ENCODE measurements at regions of chr12 and their contacts with region 1.

Region 1: DNA sequence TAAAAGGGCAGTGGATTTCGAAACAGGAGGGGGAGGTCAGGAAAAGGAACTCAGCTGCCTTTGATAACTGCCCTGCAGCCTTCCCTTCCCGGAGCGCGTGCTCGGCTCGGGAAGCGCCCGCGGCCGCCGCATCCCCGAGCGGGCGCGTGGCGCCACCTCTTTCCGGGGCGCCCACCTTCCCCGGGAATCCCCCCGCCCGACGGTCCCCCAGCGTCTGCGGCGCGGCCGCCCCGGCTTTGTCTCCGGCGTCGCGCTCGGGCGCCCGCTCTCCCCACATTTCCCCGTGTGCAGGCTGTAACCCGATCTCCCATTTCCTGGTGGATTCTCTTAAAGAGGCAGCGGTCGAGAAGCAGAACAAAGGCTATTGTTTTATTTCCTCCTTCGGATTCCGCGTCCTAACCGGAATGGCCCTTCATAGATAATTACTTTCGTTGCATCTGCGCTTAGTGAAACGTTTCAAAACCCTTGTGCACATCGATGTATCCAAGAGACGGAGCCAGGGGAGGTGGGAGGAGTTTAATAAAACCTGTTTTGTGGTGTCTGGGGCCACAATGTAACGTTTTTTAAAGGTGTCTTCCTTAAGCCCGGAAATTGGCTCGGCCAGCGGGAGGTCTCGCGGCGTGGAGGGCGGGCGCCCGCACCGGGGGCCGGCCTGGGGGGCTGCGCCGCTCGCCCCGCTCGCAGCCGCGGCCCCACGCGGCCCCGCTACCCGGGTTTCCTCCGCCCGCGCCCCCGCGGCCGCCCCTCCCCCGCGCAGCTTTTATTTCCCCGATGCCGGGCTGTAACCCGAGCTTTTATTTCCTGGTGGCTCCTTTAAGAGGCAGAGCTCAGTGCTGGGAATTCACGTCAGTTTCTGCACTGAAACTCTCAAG is at the start of gene ETV6:
- DNase-seq: peak; percentile 83 to 89
- H3K4me3 ChIP-seq: peak within 1 kb of the TSS; percentile 85
- H3K27ac ChIP-seq: peak within 1 kb of the TSS; percentile 99
- H3K4me1 ChIP-seq: peaks cover 29% of the 10 kb centered on the region
- H3K27me3 ChIP-seq: no peaks in the 10 kb centered on the region
- CTCF ChIP-seq: no peak
- total RNA-seq, gene ETV6: 52.1 and 62.8 TPM in 2 replicates

Region 2: DNA sequence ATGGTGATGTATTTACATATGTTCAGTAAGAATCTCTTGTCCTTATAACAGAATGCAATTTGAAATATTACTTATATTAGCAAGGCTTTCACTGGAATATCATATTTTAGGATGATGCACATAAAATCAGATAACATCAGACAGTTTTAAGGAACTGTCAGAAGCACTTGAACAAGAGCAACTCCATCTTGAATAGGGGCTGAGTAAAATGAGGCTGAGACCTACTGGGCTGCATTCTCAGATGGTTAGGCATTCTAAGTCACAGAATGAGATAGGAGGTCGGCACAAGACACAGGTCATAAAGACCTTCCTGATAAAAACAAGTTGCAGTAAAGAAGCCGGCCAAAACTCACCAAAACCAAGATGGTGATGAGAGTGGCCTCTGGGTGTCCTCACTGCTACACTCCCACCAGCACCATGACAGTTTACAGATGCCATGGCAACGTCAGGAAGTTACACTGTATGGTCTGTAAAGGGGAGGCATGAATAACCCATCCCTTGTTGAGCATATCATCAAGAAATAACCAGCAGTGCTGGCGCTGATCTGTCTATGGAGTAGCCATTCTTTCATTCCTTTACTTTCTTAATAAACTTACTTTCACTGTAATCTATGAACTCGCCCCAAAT is 27.2 kb before region 1 on chr12:
- CTCF ChIA-PET with region 1: no interaction called
- POLR2A ChIA-PET with region 1: no interaction called
- intact Hi-C with region 1: loop called (anchors 2 kb)
- DNase-seq: no peak
- H3K4me3 ChIP-seq: no peak overlapping the region
- H3K27ac ChIP-seq: peak overlapping the region; percentile 85; the same call in 1 of the 2 replicates
- H3K4me1 ChIP-seq: peaks cover 23% of the 10 kb centered on the region
- H3K27me3 ChIP-seq: no peaks in the 10 kb centered on the region
- CTCF ChIP-seq: no peak

Region 3: GRCh38 chr12:11730299-11731041 is 81.4 kb after region 1 on chr12:
- CTCF ChIA-PET with region 1: interaction called, 3 read pairs
- POLR2A ChIA-PET with region 1: interaction called, 14 read pairs
- intact Hi-C with region 1: loop called (anchors 1 kb)
- DNase-seq: peak; percentile 83 to 96
- H3K4me3 ChIP-seq: peak overlapping the region; percentile 8; the same call in 1 of the 2 replicates
- H3K27ac ChIP-seq: peak overlapping the region; percentile 87
- H3K4me1 ChIP-seq: peaks cover 44% of the 10 kb centered on the region
- H3K27me3 ChIP-seq: no peaks in the 10 kb centered on the region
- CTCF ChIP-seq: no peak

Region 4: DNA sequence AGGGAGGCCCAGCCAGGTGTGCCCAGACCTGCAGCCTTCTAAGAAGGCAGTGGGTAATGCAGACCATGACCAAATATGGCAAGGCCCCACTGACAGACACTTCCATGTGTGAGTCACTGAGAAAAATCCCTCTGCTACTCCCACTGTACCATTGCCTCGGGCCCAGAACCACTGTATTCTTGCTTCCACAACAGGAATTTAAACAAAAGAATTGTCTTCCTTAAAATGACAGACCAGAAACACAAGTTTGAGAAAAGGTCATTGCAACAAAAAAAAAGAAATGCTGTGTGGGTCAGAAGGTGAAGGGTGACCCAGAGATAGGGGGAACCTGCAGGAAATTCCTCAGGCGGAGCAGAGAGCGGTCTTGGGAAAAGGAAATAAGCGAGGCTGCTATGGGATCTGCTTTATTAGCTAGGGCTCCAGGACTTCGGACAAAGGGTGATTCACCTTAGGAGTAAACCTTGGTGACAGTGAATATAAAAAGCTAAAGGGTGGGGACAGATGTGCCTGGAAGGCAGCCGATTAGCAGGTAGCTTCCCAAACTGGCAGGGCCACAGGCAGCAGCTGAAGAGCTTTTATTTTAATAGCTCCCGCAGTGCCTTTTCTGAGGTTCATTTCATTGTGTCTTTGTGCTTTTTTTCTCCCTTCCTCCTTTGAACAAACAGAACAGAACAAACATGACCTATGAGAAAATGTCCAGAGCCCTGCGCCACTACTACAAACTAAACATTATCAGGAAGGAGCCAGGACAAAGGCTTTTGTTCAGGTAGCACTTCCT is 236.4 kb after region 1 on chr12:
- CTCF ChIA-PET with region 1: no interaction called
- POLR2A ChIA-PET with region 1: interaction called, 4 read pairs
- intact Hi-C with region 1: loop called (anchors 2 kb)
- DNase-seq: peak; percentile 89 to 99
- H3K4me3 ChIP-seq: peak overlapping the region; percentile 35; the same call in 1 of the 2 replicates
- H3K27ac ChIP-seq: peak overlapping the region; percentile 99
- H3K4me1 ChIP-seq: peaks cover 39% of the 10 kb centered on the region
- H3K27me3 ChIP-seq: no peaks in the 10 kb centered on the region
- CTCF ChIP-seq: no peak

Region 5: DNA sequence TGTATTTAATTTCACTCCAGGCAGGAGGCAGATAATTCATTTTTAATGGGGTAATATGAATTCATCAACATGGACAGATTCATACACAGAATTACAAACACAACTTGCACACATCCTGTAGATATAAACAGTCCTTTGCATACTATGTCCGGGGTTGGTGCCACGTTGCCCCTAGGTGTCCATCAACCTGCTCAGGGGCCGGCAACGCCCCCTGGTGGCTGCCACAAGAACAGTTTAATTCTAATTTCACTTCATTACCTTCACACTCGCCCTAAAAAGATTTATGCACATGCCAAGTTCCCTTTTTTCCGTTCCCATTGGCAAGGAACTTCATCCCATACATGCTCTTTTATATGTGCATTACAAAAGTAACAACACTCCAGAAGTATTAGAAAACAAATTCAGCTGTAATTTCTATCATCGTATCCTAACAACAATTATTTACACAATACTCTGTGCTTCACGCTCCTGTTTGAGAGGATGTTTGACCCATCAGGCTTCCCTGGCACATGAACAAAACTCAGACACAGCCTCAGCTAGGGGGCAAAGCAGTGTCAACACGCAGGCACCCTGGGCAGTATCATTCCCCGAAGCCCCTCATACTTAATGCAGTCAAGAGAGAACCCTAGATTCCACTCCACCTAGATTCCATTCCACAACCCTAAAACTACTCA is 685.4 kb after region 1 on chr12:
- CTCF ChIA-PET with region 1: no interaction called
- POLR2A ChIA-PET with region 1: no interaction called
- intact Hi-C with region 1: loop called (anchors 10 kb)
- DNase-seq: peak in 1 of 2 experiments; percentile 57
- H3K4me3 ChIP-seq: no peak overlapping the region
- H3K27ac ChIP-seq: no peak overlapping the region
- H3K4me1 ChIP-seq: peaks cover 44% of the 10 kb centered on the region
- H3K27me3 ChIP-seq: no peaks in the 10 kb centered on the region
- CTCF ChIP-seq: peak; percentile 89